Mammary epithelial cell (primary cell): ENCODE measurements at regions of chr5 and their contacts with region 1.

Region 1: GRCh38 chr5:114940709-114941108 is 229.0 kb downstream of the TRIM36 start:
- DNase-seq: no peak
- H3K4me3 ChIP-seq: no peak overlapping the region
- H3K27ac ChIP-seq: no peak overlapping the region
- H3K4me1 ChIP-seq: no peaks in the 10 kb centered on the region
- H3K27me3 ChIP-seq: no peaks in the 10 kb centered on the region
- CTCF ChIP-seq: no peak

Region 2: DNA sequence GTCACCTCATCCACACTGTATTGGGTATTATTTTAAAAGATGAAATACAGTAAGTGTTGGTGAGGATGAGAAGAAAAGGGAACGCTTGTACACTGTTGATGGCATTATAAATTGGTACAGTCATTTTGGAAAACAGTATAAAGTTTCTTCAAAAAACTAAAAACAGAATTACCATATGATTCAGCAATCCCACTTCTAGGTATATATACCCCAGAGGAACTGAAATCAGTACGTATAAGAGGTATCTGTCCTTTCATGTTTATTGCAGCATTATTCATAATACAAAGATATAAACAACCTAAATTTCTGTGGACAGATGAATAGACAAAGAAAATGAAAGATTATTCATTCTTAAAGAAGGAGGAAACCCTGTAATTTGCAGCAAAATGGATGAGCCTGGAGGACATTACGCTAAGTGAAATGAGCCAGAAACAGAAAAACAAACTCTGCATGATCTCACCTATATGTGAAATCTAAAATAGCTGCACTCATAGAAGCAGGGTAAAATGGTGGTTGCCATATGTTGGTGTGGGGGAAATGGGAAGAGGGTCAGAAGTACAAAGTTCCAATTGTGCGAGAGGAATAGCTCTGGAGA is 37.4 kb after region 1 on chr5:
- CTCF ChIA-PET with region 1: no interaction called
- dilution Hi-C with region 1: no loop called
- in situ Hi-C with region 1: no loop called
- intact Hi-C with region 1: loop called (anchors 2 kb)
- DNase-seq: no peak
- H3K4me3 ChIP-seq: no peak overlapping the region
- H3K27ac ChIP-seq: no peak overlapping the region
- H3K4me1 ChIP-seq: no peaks in the 10 kb centered on the region
- H3K27me3 ChIP-seq: no peaks in the 10 kb centered on the region
- CTCF ChIP-seq: no peak

Region 3: GRCh38 chr5:114999176-114999575 is 58.5 kb after region 1 on chr5:
- CTCF ChIA-PET with region 1: no interaction called
- dilution Hi-C with region 1: no loop called
- in situ Hi-C with region 1: no loop called
- intact Hi-C with region 1: no loop called
- DNase-seq: no peak
- H3K4me3 ChIP-seq: no peak overlapping the region
- H3K27ac ChIP-seq: no peak overlapping the region
- H3K4me1 ChIP-seq: no peaks in the 10 kb centered on the region
- H3K27me3 ChIP-seq: no peaks in the 10 kb centered on the region
- CTCF ChIP-seq: no peak